ENCODE measurements at regions of chr21 and their contacts with region 1.

Region 1: DNA sequence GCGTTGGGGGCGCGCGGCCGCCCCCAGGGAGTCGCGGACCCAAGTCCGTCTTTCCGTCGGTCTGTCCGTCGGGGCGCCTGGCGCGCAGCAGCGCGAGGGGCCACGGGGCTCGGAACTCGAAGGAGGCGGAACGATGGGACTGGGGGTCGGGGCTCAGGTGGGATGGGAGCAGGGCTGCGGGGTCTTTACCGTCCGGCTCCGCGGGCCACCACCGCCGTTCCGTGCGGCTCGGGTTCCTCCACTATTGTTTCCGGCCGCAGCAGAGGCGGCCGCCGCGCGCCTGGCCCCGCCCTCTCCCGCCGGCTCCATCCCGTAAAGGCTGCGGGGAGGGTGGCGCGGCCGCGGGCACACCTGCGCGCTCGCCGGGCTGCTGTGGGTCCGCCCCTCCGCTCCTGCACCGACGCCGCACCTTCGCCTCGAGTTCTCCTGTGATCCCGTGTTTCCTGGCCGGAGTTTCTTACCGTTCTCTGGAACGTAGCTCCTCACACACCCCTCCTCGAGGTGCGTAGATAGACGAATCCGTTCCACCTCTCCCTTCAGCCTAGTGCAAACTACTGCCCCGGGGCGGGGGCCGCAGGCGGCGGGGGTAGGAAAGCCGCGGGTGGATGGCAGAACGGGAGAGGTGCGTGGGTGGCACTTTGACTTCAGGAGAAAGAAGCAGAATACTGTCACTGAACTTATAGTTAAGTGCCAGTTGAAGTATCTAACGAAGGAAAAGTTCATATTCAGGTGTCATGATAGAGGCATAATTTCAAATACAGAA is at the start of gene C21orf91:
- DNase-seq: peak; percentile 78 to 83 (median 82)
- H3K4me3 ChIP-seq: peak within 1 kb of the TSS; percentile 85 to 94 (median 92)
- H3K4me3 Mint-ChIP-seq: peak within 1 kb of the TSS; percentile 92 to 94
- H3K27ac ChIP-seq: peak within 1 kb of the TSS; percentile 74 to 94
- H3K27ac Mint-ChIP-seq: peak within 1 kb of the TSS; percentile 91 to 100 (median 99)
- H3K4me1 ChIP-seq: peaks cover 16 to 30% of the 10 kb centered on the region in 2 donors
- H3K4me1 Mint-ChIP-seq: peaks cover 30% of the 10 kb centered on the region
- H3K27me3 ChIP-seq: no peaks in the 10 kb centered on the region
- H3K27me3 Mint-ChIP-seq: no peaks in the 10 kb centered on the region
- CTCF ChIP-seq: no peak
- polyA plus RNA-seq, gene C21orf91: 4.6 to 22.3 (median 18.9) TPM

Region 2: GRCh38 chr21:17537299-17537698 is 282.0 kb before region 1 on chr21:
- intact Hi-C with region 1: loop called in 1 of 2 experiments (anchors 10 kb)
- DNase-seq: no peak
- H3K4me3 ChIP-seq: no peak overlapping the region
- H3K4me3 Mint-ChIP-seq: peak overlapping the region in 1 of 2 donors; percentile 70
- H3K27ac ChIP-seq: no peak overlapping the region
- H3K27ac Mint-ChIP-seq: peak overlapping the region in 1 of 7 donors; percentile 41
- H3K4me1 ChIP-seq: peaks cover 35 to 41% of the 10 kb centered on the region in 2 donors
- H3K4me1 Mint-ChIP-seq: peaks cover 37% of the 10 kb centered on the region
- H3K27me3 ChIP-seq: peaks cover 5 to 9% of the 10 kb centered on the region in 2 donors
- H3K27me3 Mint-ChIP-seq: peaks cover 25 to 39% (median 26%) of the 10 kb centered on the region in 3 donors
- CTCF ChIP-seq: no peak

Region 3: GRCh38 chr21:17611414-17612022 is 207.8 kb before region 1 on chr21:
- intact Hi-C with region 1: loop called in 1 of 2 experiments (anchors 10 kb)
- DNase-seq: peak; percentile 77 to 87 (median 82)
- H3K4me3 ChIP-seq: peak overlapping the region; percentile 74 to 84 (median 77)
- H3K4me3 Mint-ChIP-seq: peak overlapping the region; percentile 98 to 99
- H3K27ac ChIP-seq: peak overlapping the region; percentile 35 to 66
- H3K27ac Mint-ChIP-seq: peak overlapping the region; percentile 84 to 98 (median 96)
- H3K4me1 ChIP-seq: peaks cover 10 to 15% of the 10 kb centered on the region in 2 donors
- H3K4me1 Mint-ChIP-seq: peaks cover 14% of the 10 kb centered on the region
- H3K27me3 ChIP-seq: no peaks in the 10 kb centered on the region
- H3K27me3 Mint-ChIP-seq: peaks cover 5 to 15% (median 8%) of the 10 kb centered on the region in 3 donors
- CTCF ChIP-seq: no peak

Region 4: DNA sequence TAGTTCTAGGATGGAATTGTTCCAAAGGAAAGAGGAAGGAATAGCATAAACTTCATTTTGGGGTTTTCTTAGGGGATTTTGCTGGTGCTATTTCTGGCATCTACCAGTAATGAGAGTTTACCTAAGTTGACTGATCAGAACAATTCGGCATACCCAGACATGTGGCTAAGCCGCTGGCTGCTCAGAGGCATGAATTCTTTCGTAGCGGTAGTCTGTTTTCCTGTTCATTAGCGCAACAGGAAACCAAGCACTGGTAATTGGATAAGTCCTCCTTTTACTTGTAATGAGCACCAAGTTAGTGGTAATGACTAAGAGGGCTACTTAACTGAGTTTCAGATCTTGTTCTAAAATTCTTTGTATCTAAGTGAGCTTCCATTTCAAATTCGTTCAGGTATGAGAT is 38.8 kb before region 1 on chr21:
- intact Hi-C with region 1: loop called in 1 of 2 experiments (anchors 5 kb)
- DNase-seq: peak; percentile 55 to 89 (median 82)
- H3K4me3 ChIP-seq: peak overlapping the region in 1 of 3 experiments; percentile 29
- H3K4me3 Mint-ChIP-seq: peak overlapping the region; percentile 13 to 60
- H3K27ac ChIP-seq: peak overlapping the region; percentile 44 to 70
- H3K27ac Mint-ChIP-seq: peak overlapping the region; percentile 61 to 87 (median 79)
- H3K4me1 ChIP-seq: peaks cover 78 to 82% of the 10 kb centered on the region in 2 donors
- H3K4me1 Mint-ChIP-seq: peaks cover 78% of the 10 kb centered on the region
- H3K27me3 ChIP-seq: no peaks in the 10 kb centered on the region
- H3K27me3 Mint-ChIP-seq: peaks cover 0 to 6% (median 1%) of the 10 kb centered on the region in 3 donors
- CTCF ChIP-seq: no peak

Region 5: GRCh38 chr21:17903029-17903806 is 83.9 kb after region 1 on chr21:
- intact Hi-C with region 1: loop called in 1 of 2 experiments (anchors 5 kb)
- DNase-seq: peak; percentile 4 to 53 (median 17)
- H3K4me3 ChIP-seq: no peak overlapping the region
- H3K4me3 Mint-ChIP-seq: no peak overlapping the region
- H3K27ac ChIP-seq: no peak overlapping the region
- H3K27ac Mint-ChIP-seq: no peak overlapping the region
- H3K4me1 ChIP-seq: no peaks in the 10 kb centered on the region
- H3K4me1 Mint-ChIP-seq: peaks cover 4% of the 10 kb centered on the region
- H3K27me3 ChIP-seq: no peaks in the 10 kb centered on the region
- H3K27me3 Mint-ChIP-seq: peaks cover 0 to 3% (median 0%) of the 10 kb centered on the region in 3 donors
- CTCF ChIP-seq: peak; percentile 65

Measured in CD14-positive monocyte (primary cell).